ENCODE measurements at regions of chr15 and their contacts with region 1.

Region 1: DNA sequence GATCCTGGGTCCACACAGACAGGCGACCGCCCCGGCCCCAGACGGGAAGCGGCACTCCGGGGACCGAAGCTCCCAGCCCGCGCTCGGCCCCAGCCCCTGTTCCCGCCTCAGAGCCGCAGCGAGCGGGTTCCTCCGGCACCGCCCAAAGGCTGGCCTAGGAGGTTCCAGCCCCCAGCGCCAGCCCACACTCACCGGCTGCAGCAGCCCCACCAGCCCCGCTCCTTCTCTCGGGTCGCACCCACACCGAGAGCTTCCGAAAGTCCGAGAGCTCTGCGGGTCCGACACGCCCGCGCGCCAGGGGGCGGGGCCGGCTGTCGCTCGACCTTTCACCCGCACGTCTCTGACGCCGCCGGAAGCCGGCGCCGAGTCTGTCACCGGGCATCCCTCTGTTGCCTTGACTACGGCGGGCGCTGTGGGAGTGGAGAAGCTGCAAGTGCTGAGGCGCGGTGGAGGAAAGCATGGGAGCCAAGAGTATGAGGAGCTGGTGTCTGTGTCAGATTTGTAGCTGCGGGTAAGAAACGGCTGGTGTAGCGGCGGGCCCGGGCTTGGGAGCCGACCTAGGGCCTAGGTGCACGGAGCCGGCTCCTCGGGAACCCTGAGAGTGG is at the starts of genes EFL1 and SAXO2:
- DNase-seq: peak; percentile 88 to 92
- H3K4me3 ChIP-seq: peak within 1 kb of the TSS; percentile 92
- H3K4me3 Mint-ChIP-seq: peak within 1 kb of the TSS; percentile 97
- H3K27ac Mint-ChIP-seq: peak within 1 kb of the TSS; percentile 97
- H3K4me1 ChIP-seq: peaks cover 13% of the 10 kb centered on the region
- H3K4me1 Mint-ChIP-seq: peaks cover 14% of the 10 kb centered on the region
- H3K27me3 ChIP-seq: no peaks in the 10 kb centered on the region
- H3K27me3 Mint-ChIP-seq: no peaks in the 10 kb centered on the region
- CTCF ChIP-seq: no peak
- total RNA-seq, gene EFL1: 10.3 and 14.3 TPM in 2 replicates
- total RNA-seq, gene SAXO2: 0.61 TPM in 1 of 2 replicates, not detected in the other

Region 2: GRCh38 chr15:82228750-82229149 is 33.8 kb before region 1 on chr15:
- CTCF ChIA-PET with region 1: no interaction called
- POLR2A ChIA-PET with region 1: no interaction called
- intact Hi-C with region 1: loop called (anchors 5 kb)
- DNase-seq: no peak
- H3K4me3 ChIP-seq: no peak overlapping the region
- H3K4me3 Mint-ChIP-seq: no peak overlapping the region
- H3K27ac Mint-ChIP-seq: no peak overlapping the region
- H3K4me1 ChIP-seq: peaks cover 8% of the 10 kb centered on the region; the same call in 1 of the 2 replicates
- H3K4me1 Mint-ChIP-seq: peaks cover 7% of the 10 kb centered on the region
- H3K27me3 ChIP-seq: no peaks in the 10 kb centered on the region
- H3K27me3 Mint-ChIP-seq: no peaks in the 10 kb centered on the region
- CTCF ChIP-seq: no peak

Measured in Caco-2 (cell line).